ENCODE measurements at regions of chr5 and their contacts with region 1.

Region 1: GRCh38 chr5:140690941-140691924 is at the starts of genes HARS1 and HARS2:
- DNase-seq: peak; percentile 85
- H3K4me3 Mint-ChIP-seq: peak within 1 kb of the TSS; percentile 98
- H3K27ac Mint-ChIP-seq: peak within 1 kb of the TSS; percentile 89
- H3K4me1 Mint-ChIP-seq: peaks cover 44% of the 10 kb centered on the region
- H3K27me3 Mint-ChIP-seq: no peaks in the 10 kb centered on the region
- total RNA-seq, gene HARS1: 66.0 to 70.2 TPM
- total RNA-seq, gene HARS2: 30.6 to 34.7 TPM

Region 2: DNA sequence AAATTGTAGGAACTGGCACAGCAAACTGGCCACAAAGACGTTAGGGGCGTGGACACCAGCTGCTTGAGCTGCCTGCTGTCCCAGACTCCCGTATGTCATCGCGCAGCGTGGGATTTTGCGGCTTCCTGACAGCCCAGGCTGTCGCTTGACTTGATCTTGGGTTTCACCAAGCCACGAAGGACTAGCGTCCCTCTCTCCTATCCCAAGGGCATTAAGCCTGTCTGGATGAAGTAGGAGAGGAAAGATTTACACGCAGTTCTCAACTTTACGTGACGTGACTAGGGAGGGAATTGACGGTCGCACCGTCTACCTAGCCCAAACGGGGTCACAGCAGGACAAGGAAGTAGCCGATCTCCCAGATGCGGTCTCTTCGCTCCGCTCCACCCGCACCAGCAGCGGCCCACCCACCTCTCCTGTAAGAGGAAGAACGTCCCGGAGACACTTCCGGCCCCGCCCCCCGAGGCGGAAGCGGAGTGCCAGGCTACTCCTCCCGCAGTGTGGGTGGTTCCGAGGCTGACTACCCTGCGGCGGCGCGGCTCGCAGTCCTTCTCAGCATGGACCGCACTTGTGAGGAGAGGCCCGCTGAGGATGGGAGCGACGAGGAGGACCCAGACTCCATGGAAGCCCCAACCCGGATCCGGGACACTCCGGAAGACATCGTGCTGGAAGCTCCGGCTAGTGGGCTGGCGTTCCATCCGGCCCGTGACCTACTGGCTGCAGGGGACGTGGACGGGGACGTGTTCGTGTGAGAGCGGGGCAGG is 26.7 kb before region 1 on chr5 and contains the start of gene WDR55:
- CTCF ChIA-PET with region 1: interaction called, 3 read pairs
- POLR2A ChIA-PET with region 1: interaction called, 32 read pairs
- DNase-seq: peak; percentile 96
- H3K4me3 Mint-ChIP-seq: peak within 1 kb of the TSS; percentile 83
- H3K27ac Mint-ChIP-seq: peak within 1 kb of the TSS; percentile 91
- H3K4me1 Mint-ChIP-seq: peaks cover 37% of the 10 kb centered on the region
- H3K27me3 Mint-ChIP-seq: no peaks in the 10 kb centered on the region
- total RNA-seq, gene WDR55: 35.0 to 35.2 TPM

Region 3: DNA sequence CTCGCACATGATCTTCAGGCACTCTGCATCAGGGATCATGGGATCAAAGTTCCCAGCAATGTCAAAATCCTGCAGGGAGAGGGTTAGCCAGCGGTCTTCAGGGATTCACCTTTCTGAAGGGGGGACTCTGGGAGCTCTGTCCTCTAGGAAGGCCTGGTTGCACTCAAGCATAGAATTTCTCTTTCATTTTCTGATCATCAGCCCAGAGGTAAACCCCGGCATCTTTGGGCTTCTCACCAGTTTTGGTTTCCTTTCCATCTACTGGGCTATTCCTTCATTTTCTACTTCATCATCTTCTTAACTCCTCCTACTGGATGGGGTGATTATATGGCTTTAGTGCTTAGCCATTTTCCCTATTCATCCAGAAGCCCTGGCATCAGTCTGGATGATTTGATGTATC is 13.3 kb before region 1 on chr5:
- CTCF ChIA-PET with region 1: no interaction called
- POLR2A ChIA-PET with region 1: interaction called, 22 read pairs
- DNase-seq: no peak
- H3K4me3 Mint-ChIP-seq: no peak overlapping the region
- H3K27ac Mint-ChIP-seq: peak overlapping the region; percentile 45
- H3K4me1 Mint-ChIP-seq: peaks cover 4% of the 10 kb centered on the region
- H3K27me3 Mint-ChIP-seq: no peaks in the 10 kb centered on the region

Region 4: GRCh38 chr5:140710899-140711552 is 19.8 kb after region 1 on chr5:
- CTCF ChIA-PET with region 1: interaction called, 6 read pairs
- POLR2A ChIA-PET with region 1: interaction called, 42 read pairs
- DNase-seq: peak; percentile 91
- H3K4me3 Mint-ChIP-seq: peak overlapping the region; percentile 80
- H3K27ac Mint-ChIP-seq: peak overlapping the region; percentile 90
- H3K4me1 Mint-ChIP-seq: peaks cover 23% of the 10 kb centered on the region
- H3K27me3 Mint-ChIP-seq: peaks cover 5% of the 10 kb centered on the region